Uterus (tissue), 4 donors: ENCODE measurements at regions of chr1 and their contacts with region 1.

Region 1: DNA sequence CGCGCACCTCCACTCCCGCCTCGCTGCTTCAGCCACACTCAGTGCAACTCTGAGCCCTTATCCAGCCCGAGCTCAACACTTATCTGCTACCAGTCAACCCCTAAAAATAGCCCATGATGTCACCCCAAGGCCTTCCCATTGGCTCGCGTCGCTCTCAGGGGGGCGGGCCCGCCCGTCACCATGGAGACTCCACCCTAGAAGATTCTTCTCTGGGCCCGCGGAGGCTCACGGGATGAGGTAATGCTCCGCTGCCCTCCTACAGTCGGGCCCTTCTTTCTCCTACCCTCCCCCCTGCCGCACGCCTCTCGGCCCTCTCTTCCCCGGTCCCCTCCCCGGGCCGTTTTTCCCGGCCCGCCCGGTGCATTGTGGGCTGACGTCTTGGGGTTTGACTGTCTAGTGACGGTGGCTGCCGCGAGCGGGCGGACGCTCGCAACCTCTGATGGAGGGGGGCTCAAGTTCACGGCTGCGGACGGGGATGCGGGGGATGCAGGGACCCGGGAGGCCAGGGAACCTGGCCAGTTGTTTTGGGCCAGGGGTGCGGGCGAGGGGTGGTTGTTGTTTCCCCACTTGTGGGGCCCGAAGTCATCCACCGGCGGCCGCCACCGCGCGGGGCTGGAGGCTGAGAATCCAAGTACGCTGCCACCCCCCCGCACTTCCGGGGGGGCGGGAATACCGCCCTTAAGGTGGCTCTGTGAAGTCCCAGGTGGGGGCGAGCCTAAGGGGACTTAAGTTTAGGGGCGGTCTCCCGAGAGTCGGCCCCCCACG is at the start of gene JUN:
- DNase-seq: peak; percentile 100
- H3K4me3 ChIP-seq: peak within 1 kb of the TSS; percentile 93 to 95
- H3K27ac ChIP-seq: peak within 1 kb of the TSS; percentile 99 to 100
- H3K4me1 ChIP-seq: peaks cover 0 to 6% of the 10 kb centered on the region in 2 donors
- H3K27me3 ChIP-seq: no peaks in the 10 kb centered on the region
- CTCF ChIP-seq: peak in 3 of 4 experiments; percentile 18 to 38 (median 22)
- POLR2A ChIP-seq: peak; percentile 98
- total RNA-seq, gene JUN: 154 to 246 (median 239) TPM

Region 2: GRCh38 chr1:58903514-58904298 is 119.5 kb after region 1 on chr1:
- intact Hi-C with region 1: loop called (anchors 10 kb)
- DNase-seq: peak; percentile 95 to 96
- H3K4me3 ChIP-seq: peak overlapping the region; percentile 29 to 50
- H3K27ac ChIP-seq: peak overlapping the region; percentile 97 to 98
- H3K4me1 ChIP-seq: peaks cover 0 to 8% of the 10 kb centered on the region in 2 donors
- H3K27me3 ChIP-seq: no peaks in the 10 kb centered on the region
- CTCF ChIP-seq: peak in 1 of 4 experiments; percentile 26
- POLR2A ChIP-seq: peak; percentile 93

Region 3: DNA sequence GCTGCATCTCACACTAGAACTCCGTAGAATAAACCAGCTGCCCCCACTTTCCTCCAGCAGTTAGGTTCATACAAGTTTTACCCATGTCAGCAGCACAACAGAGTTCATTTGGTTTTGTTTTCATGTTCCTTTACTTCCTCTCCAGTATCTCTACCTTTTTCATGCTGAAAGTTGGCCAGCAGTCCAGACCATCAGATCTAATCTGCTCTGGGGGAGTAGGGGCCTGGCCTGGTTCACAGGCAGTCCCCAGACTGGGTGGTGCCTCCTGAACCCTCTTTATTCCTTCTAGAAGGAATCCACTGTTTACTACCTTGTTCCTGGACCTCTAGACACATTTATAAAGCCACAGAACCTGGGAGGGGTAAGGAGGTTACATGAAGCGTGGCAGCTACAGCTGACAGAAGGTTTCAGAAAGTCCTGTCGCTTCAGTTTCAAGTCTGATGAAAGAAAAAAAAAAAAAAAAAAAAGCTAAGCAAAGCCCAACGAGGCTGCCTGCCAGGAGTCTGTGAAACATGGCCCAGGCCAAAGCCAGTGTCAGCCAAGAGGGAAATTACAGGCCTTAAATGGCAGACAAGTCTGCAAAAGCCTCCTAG is 184.3 kb after region 1 on chr1:
- intact Hi-C with region 1: no loop called
- DNase-seq: peak; percentile 87 to 90
- H3K4me3 ChIP-seq: no peak overlapping the region
- H3K27ac ChIP-seq: peak overlapping the region; percentile 91 to 93
- H3K4me1 ChIP-seq: peaks cover 6 to 10% of the 10 kb centered on the region in 2 donors
- H3K27me3 ChIP-seq: no peaks in the 10 kb centered on the region
- CTCF ChIP-seq: peak in 1 of 4 experiments; percentile 5
- POLR2A ChIP-seq: no peak

Region 4: GRCh38 chr1:59549903-59550302 is 765.7 kb after region 1 on chr1:
- intact Hi-C with region 1: loop called (anchors 10 kb)
- DNase-seq: peak; percentile 48 to 78
- H3K4me3 ChIP-seq: no peak overlapping the region
- H3K27ac ChIP-seq: peak overlapping the region; percentile 68 to 79
- H3K4me1 ChIP-seq: peaks cover 0 to 14% of the 10 kb centered on the region in 2 donors
- H3K27me3 ChIP-seq: no peaks in the 10 kb centered on the region
- CTCF ChIP-seq: peak in 1 of 4 experiments; percentile 18
- POLR2A ChIP-seq: no peak